Activated T-helper 1 cell treated with anti-CD3 and anti-CD28 coated beads, Interleukin-12 subunit alpha, Interleukin-12 subunit beta, Interleukin-2, Interleukin-4 antibody, amounts not matched to agents 30 ng/mL and 10 ng/mL and 1 ng/mL, durations not matched to agents 14 hours and 24 hours and 36 hours (primary cell): ENCODE measurements at regions of chr15 and their contacts with region 1.

Region 1: DNA sequence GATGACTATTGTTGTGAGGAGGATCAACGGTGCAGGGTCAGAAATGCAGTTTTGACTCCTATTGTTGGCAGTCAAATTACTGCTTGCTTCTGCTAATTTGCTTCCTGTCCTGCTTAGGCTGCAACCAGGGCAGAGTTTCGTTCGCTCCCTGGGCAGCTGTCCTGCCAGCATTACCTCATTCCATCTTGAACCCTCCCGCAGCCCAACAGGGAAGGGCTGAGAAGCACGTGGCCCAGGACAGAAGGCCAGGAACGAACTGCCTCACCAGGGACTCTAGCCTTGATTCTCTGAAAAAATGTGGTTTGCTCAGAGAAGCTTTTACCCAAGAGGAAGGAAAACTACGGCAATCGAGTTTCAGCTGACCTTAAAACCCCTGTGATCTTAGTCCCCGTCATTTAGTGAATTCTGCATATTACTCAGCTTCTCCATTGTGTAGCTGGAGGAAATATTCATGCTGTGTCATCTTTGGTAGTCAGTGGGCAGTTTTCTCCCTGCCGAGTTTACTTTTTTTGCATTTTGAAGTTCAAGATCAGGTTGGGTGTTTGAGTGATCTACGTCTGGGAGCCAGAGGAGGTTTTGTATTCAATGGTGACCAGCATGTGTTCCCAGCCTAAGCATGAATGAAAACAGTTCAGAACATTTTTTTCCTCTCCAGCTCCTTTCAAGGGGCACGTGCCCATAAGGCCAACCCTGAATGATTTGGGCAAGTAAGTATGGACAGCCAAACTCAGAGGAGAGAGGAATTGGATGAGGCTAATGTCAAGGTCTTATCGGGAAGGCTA is 23.0 kb downstream of the TLNRD1 start:
- DNase-seq: peak; percentile 35
- H3K4me3 Mint-ChIP-seq: peak overlapping the region; percentile 51
- H3K27ac Mint-ChIP-seq: peak overlapping the region; percentile 96
- H3K4me1 Mint-ChIP-seq: peaks cover 43% of the 10 kb centered on the region
- H3K27me3 Mint-ChIP-seq: no peaks in the 10 kb centered on the region

Region 2: GRCh38 chr15:80915472-80915871 is 108.2 kb before region 1 on chr15:
- intact Hi-C with region 1: no loop called
- DNase-seq: no peak
- H3K4me3 Mint-ChIP-seq: no peak overlapping the region
- H3K27ac Mint-ChIP-seq: no peak overlapping the region
- H3K4me1 Mint-ChIP-seq: peaks cover 6% of the 10 kb centered on the region
- H3K27me3 Mint-ChIP-seq: no peaks in the 10 kb centered on the region

Region 3: GRCh38 chr15:81000624-81001151 is 23.0 kb before region 1 on chr15 and contains the start of gene TLNRD1:
- intact Hi-C with region 1: loop called (anchors 1 kb)
- DNase-seq: peak; percentile 89
- H3K4me3 Mint-ChIP-seq: peak within 1 kb of the TSS; percentile 97
- H3K27ac Mint-ChIP-seq: peak within 1 kb of the TSS; percentile 98
- H3K4me1 Mint-ChIP-seq: peaks cover 62% of the 10 kb centered on the region
- H3K27me3 Mint-ChIP-seq: peaks cover 2% of the 10 kb centered on the region
- total RNA-seq, gene TLNRD1: 30.2 and 30.8 TPM in 2 replicates

Region 4: DNA sequence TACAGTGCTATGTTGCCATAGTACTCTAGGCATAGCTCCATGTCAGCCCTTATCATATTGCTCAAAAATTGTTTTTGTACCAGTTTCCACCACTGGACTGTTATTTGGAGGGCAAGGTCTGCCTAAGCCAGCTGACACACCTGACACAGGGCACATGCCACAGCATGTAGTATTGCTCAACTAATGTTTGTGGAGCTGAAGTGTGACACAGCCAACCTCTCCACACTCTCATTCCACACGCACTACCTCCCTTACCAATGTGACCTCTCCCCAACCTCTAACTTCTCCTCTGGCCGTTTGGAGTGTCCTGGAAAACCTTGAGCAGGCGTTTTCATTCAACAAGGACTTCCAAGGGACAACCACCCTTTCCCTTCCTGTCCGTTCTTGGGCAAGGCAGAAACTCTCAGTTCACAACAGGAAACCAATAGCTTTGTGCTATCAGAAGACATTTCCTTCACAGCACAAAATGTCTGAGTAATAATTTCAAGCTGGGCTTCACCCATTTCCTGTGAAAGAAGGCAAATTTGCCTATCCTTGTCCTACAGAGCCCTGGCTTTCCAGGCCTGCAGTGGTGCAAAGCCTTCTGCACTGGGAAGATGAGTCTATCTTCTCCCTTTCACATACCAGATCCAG is 15.4 kb after region 1 on chr15:
- intact Hi-C with region 1: loop called (anchors 2 kb)
- DNase-seq: no peak
- H3K4me3 Mint-ChIP-seq: no peak overlapping the region
- H3K27ac Mint-ChIP-seq: no peak overlapping the region
- H3K4me1 Mint-ChIP-seq: peaks cover 22% of the 10 kb centered on the region
- H3K27me3 Mint-ChIP-seq: peaks cover 5% of the 10 kb centered on the region

Region 5: DNA sequence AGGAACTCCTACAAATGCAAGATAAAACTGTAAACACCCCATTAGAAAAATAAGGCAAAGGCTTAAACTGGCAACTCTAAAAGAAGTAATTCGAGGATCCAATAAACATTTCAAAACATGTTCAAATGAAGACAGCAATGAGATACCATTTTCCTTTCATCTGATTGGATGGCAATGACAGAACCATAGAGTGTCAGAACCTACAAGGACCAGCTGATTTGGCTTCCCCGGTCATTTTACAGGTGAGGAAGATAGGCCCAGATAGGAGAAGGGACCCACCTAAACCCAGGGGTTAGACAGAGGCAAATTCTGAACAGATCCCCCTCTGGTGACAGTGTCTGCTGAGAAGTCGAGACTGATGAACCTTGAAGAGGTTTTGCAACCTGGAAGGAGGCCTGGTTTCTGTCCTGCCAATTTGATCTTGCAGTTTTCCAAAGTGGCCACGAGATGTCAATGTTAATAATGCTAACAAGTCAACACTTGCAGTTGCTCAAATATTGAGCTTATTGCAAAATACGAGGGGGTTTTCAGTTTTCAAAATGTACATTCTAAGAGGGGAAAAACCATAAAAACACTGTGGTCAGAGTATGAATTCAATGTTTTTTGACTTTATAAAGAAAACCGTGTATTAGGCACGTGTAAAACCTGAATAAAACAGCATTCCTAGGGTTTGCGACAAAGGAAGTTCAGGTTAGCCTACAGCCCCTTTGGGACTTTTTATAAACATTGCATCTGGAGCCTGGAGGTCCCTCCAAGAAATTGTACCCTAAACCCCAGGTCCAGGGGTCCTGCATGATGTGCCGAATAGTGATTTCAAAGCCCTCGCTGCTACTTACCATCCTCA is 131.9 kb after region 1 on chr15:
- intact Hi-C with region 1: loop called (anchors 5 kb)
- DNase-seq: no peak
- H3K4me3 Mint-ChIP-seq: no peak overlapping the region
- H3K27ac Mint-ChIP-seq: no peak overlapping the region
- H3K4me1 Mint-ChIP-seq: peaks cover 6% of the 10 kb centered on the region
- H3K27me3 Mint-ChIP-seq: peaks cover 17% of the 10 kb centered on the region